GM12878 (cell line): ENCODE measurements at regions of chr12 and their contacts with region 1.

Region 1: GRCh38 chr12:50986966-50987737 is 34.8 kb downstream of the HIGD1C start:
- DNase-seq: no peak
- ATAC-seq: peak; percentile 69
- H3K4me3 ChIP-seq: no peak overlapping the region
- H3K27ac ChIP-seq: no peak overlapping the region
- H3K4me1 ChIP-seq: peaks cover 17% of the 10 kb centered on the region
- H3K27me3 ChIP-seq: no peaks in the 10 kb centered on the region
- CTCF ChIP-seq: peak; percentile 45 to 68 (median 64); a peak in 5 of 6 replicates
- EP300 ChIP-seq: no peak
- POLR2A ChIP-seq: no peak
- RAD21 ChIP-seq: peak; percentile 77

Region 2: DNA sequence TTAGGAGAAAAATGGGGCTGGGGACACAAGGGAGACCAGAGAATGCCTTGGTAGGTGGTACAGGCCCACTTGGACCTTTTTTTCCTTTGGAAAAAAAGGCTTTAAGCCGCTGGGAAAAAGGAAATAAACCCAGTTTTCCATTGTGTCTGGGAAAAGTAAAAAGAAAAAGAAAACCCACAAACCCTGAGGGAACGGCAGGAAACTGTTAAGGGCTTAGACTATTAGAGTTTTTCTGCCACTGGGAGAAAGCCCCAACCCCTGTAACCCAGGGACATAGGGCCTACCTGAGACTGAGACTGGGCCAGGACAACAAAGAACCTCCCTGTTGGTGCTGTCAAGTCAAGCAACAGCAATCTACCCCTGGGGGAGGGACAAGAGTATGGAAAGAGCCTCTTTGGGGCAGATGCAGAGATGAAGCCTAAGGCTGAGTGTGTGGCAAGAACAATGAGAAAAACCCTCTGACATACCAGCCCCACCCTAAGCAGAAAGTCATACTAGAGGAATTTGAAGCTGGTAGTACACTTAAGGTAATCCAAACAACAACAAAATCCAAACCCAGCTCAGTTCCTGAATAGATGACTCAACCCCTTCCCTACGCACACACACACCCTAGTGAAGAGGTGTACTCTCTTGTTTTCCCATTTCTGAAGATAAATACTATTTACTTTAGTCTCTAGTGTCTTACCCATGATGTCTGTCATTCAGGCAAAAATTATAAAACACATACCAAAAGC is 200.5 kb before region 1 on chr12:
- CTCF ChIA-PET with region 1: no interaction called
- POLR2A ChIA-PET with region 1: no interaction called
- RAD21 ChIA-PET with region 1: no interaction called
- SMC1A ChIA-PET with region 1: no interaction called
- in situ Hi-C with region 1: no loop called
- intact Hi-C with region 1: no loop called
- DNase-seq: no peak
- ATAC-seq: no peak
- H3K4me3 ChIP-seq: no peak overlapping the region
- H3K27ac ChIP-seq: no peak overlapping the region
- H3K4me1 ChIP-seq: no peaks in the 10 kb centered on the region
- H3K27me3 ChIP-seq: no peaks in the 10 kb centered on the region
- CTCF ChIP-seq: no peak
- EP300 ChIP-seq: no peak
- POLR2A ChIP-seq: no peak
- RAD21 ChIP-seq: no peak

Region 3: DNA sequence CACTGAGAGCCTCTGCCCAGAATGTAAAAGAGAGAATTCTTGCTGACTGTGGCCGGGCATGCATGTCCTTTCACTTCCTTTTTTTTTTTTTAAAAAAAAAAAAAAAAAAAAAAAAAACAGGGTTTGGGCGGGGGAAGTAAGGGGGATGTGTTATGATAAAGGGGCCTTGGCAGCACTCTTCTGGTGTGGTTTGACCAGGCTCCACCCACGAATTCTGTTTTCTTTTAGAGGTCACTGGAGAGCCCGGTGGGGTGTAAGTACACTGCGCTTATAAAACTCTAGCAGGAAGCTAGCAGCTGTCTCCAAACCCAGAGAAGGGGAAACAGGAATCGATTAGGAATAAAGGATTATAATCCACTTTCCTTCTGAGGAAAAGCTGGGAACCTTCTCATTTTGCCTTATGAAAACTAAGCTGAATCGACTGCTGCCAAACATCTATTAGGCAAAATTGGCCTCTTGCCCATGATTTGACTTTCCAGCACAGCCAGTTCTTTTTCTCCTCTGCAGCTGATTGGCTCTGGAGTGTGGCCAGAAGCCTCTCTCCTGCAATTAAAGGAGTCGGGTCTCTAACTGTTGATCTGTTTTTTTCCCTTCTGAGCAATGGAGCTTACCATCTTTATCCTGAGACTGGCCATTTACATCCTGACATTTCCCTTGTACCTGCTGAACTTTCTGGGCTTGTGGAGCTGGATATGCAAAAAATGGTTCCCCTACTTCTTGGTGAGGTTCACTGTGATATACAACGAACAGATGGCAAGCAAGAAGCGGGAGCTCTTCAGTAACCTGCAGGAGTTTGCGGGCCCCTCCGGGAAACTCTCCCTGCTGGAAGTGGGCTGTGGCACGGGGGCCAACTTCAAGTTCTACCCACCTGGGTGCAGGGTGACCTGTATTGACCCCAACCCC is 62.5 kb before region 1 on chr12:
- CTCF ChIA-PET with region 1: interaction called, 12 read pairs
- POLR2A ChIA-PET with region 1: interaction called, 4 read pairs
- RAD21 ChIA-PET with region 1: interaction called, 5 read pairs
- SMC1A ChIA-PET with region 1: interaction called, 5 read pairs
- in situ Hi-C with region 1: no loop called
- intact Hi-C with region 1: no loop called
- DNase-seq: peak; percentile 76
- ATAC-seq: peak; percentile 94
- H3K4me3 ChIP-seq: peak overlapping the region; percentile 60
- H3K27ac ChIP-seq: peak overlapping the region; percentile 3; the same call in 1 of the 2 replicates
- H3K4me1 ChIP-seq: peaks cover 26% of the 10 kb centered on the region
- H3K27me3 ChIP-seq: no peaks in the 10 kb centered on the region
- CTCF ChIP-seq: no peak
- EP300 ChIP-seq: peak; percentile 61 to 71; a peak in 3 of 4 replicates
- POLR2A ChIP-seq: no peak
- RAD21 ChIP-seq: no peak

Region 4: GRCh38 chr12:51009056-51009440 is 21.9 kb after region 1 on chr12:
- CTCF ChIA-PET with region 1: interaction called, 5 read pairs
- POLR2A ChIA-PET with region 1: no interaction called
- RAD21 ChIA-PET with region 1: interaction called, 4 read pairs
- SMC1A ChIA-PET with region 1: interaction called, 14 read pairs
- in situ Hi-C with region 1: no loop called
- intact Hi-C with region 1: no loop called
- DNase-seq: no peak
- ATAC-seq: peak; percentile 67
- H3K4me3 ChIP-seq: no peak overlapping the region
- H3K27ac ChIP-seq: no peak overlapping the region; the same call in 1 of the 2 replicates
- H3K4me1 ChIP-seq: no peaks in the 10 kb centered on the region; the same call in 1 of the 2 replicates
- H3K27me3 ChIP-seq: no peaks in the 10 kb centered on the region
- CTCF ChIP-seq: no peak
- EP300 ChIP-seq: no peak
- POLR2A ChIP-seq: no peak
- RAD21 ChIP-seq: no peak